ENCODE measurements at regions of chr7 and their contacts with region 1.

Region 1: GRCh38 chr7:4973728-4974198 is 14.8 kb upstream of the MMD2 start:
- DNase-seq: peak; percentile 95
- H3K4me3 Mint-ChIP-seq: peak overlapping the region; percentile 96
- H3K27ac Mint-ChIP-seq: peak overlapping the region; percentile 84
- H3K4me1 Mint-ChIP-seq: peaks cover 31% of the 10 kb centered on the region
- H3K27me3 Mint-ChIP-seq: no peaks in the 10 kb centered on the region

Region 2: DNA sequence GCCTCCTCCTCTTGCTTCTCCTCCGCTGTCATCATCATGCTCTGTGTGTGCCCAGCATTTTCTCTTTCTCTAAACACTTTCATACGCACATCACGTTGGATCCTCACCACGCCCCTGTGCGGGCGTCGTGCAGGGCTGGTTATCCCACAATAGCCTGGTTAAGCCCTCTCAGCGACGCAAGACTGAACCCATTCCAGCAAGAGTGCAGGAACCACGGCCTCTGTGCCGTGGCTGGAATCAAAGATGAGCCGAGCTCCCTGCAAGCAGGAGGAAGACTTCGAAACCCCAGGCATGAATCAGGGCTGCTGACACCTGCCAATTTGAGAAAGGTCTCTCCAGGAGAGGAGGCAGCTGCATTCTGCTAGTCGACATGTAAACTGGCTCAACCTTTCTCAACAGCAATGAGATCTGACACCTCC is 366.4 kb before region 1 on chr7:
- CTCF ChIA-PET with region 1: no interaction called
- intact Hi-C with region 1: no loop called
- DNase-seq: no peak
- H3K4me3 Mint-ChIP-seq: no peak overlapping the region
- H3K27ac Mint-ChIP-seq: no peak overlapping the region
- H3K4me1 Mint-ChIP-seq: no peaks in the 10 kb centered on the region
- H3K27me3 Mint-ChIP-seq: no peaks in the 10 kb centered on the region

Region 3: GRCh38 chr7:4797858-4798705 is 175.7 kb before region 1 on chr7:
- CTCF ChIA-PET with region 1: interaction called, 5 read pairs
- intact Hi-C with region 1: loop called (anchors 10 kb)
- DNase-seq: peak; percentile 60
- H3K4me3 Mint-ChIP-seq: no peak overlapping the region
- H3K27ac Mint-ChIP-seq: no peak overlapping the region
- H3K4me1 Mint-ChIP-seq: no peaks in the 10 kb centered on the region
- H3K27me3 Mint-ChIP-seq: no peaks in the 10 kb centered on the region

Region 4: GRCh38 chr7:4830176-4830575 is 143.6 kb before region 1 on chr7:
- CTCF ChIA-PET with region 1: interaction called, 10 read pairs
- intact Hi-C with region 1: no loop called
- DNase-seq: peak; percentile 74
- H3K4me3 Mint-ChIP-seq: no peak overlapping the region
- H3K27ac Mint-ChIP-seq: no peak overlapping the region
- H3K4me1 Mint-ChIP-seq: peaks cover 2% of the 10 kb centered on the region
- H3K27me3 Mint-ChIP-seq: no peaks in the 10 kb centered on the region

Region 5: DNA sequence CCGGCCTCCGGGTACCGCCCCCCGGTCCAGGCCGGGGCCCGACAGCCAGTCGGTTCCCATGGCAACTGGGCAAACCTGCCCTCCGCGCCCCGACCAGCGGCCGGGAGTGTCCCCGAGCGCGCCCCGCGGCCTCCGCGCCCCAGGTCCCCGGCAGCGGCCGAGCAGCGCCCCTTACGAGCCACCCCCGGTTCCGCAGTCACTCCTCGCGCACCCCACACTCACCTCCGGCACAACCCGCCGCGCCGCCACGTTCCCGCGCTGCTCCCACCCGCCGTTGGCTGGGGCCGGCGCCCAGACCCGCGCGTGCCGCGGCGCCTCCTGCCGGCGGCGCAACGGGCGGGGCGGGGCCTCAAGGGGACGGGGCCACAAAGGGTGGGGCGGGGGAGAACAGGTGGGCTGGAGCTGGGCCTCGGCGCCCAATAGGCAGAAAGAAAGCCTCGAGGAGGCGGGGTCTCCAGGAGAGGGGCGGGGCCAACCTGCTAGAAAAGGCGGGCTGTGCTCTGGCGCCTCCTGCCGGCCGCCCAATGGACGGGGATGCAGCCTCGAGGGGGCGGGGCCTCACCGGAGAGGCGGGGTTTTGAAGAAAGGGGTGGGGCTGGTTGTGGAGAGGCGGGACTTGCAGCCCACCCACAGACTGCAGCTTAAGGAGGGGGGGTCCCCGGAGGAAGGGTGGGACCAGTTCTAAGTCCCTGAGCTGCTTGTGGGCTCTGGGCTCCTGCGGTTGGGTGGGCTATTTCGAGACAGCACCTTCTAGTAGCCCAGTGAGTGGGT is 90.2 kb before region 1 on chr7 and contains the start of gene RADIL:
- CTCF ChIA-PET with region 1: no interaction called
- intact Hi-C with region 1: loop called (anchors 2 kb)
- DNase-seq: peak; percentile 96
- H3K4me3 Mint-ChIP-seq: peak within 1 kb of the TSS; percentile 56
- H3K27ac Mint-ChIP-seq: no peak within 1 kb of the TSS
- H3K4me1 Mint-ChIP-seq: peaks cover 10% of the 10 kb centered on the region
- H3K27me3 Mint-ChIP-seq: peaks cover 36% of the 10 kb centered on the region
- total RNA-seq, gene RADIL: 0.42 to 0.55 TPM

Region 6: GRCh38 chr7:5045558-5046396 is 72.0 kb after region 1 on chr7 and contains the start of gene RBAK:
- CTCF ChIA-PET with region 1: interaction called, 14 read pairs
- intact Hi-C with region 1: loop called (anchors 5 kb)
- DNase-seq: peak; percentile 92
- H3K4me3 Mint-ChIP-seq: peak within 1 kb of the TSS; percentile 88
- H3K27ac Mint-ChIP-seq: peak within 1 kb of the TSS; percentile 81
- H3K4me1 Mint-ChIP-seq: peaks cover 38% of the 10 kb centered on the region
- H3K27me3 Mint-ChIP-seq: no peaks in the 10 kb centered on the region
- total RNA-seq, gene RBAK: 5.6 to 6.5 TPM

Region 7: DNA sequence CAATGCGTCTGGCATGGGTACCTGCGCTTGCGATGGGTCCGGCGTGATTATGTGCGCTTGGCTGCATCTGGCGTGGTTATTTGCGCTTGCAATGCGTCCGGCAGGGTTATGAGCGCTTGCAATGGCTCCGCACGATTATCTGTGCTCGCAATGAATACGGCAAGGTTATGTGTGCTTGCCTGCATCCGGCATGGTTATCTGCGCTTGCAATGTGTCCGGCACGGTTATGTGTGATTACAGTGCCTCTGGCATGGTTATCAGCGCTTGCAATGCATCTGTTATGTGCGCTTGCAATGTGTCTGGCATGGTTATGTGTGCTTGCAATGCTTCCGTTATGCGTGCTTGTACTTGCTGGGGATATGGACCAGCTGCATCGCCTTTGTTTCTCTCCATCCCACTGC is 109.5 kb after region 1 on chr7:
- CTCF ChIA-PET with region 1: interaction called, 62 read pairs
- intact Hi-C with region 1: loop called (anchors 1 kb)
- DNase-seq: no peak
- H3K4me3 Mint-ChIP-seq: no peak overlapping the region
- H3K27ac Mint-ChIP-seq: no peak overlapping the region
- H3K4me1 Mint-ChIP-seq: peaks cover 2% of the 10 kb centered on the region
- H3K27me3 Mint-ChIP-seq: peaks cover 8% of the 10 kb centered on the region

Region 8: GRCh38 chr7:5193880-5194279 is 220.1 kb after region 1 on chr7:
- CTCF ChIA-PET with region 1: no interaction called
- intact Hi-C with region 1: loop called (anchors 10 kb)
- DNase-seq: no peak
- H3K4me3 Mint-ChIP-seq: no peak overlapping the region
- H3K27ac Mint-ChIP-seq: no peak overlapping the region
- H3K4me1 Mint-ChIP-seq: peaks cover 26% of the 10 kb centered on the region
- H3K27me3 Mint-ChIP-seq: no peaks in the 10 kb centered on the region

Measured in activated naive CD4-positive, alpha-beta T cell treated with anti-CD3 and anti-CD28 coated beads for 36 hours (primary cell).